Right lobe of liver (tissue), 6 donors: ENCODE measurements at regions of chr10 and their contacts with region 1.

Region 1: GRCh38 chr10:69914398-69915214 is 112.9 kb downstream of the COL13A1 start:
- DNase-seq: peak; percentile 69 to 78 (median 76)
- ATAC-seq: peak; percentile 87 to 96 (median 92)
- H3K4me3 ChIP-seq: no peak overlapping the region
- H3K27ac ChIP-seq: no peak overlapping the region
- H3K4me1 ChIP-seq: peaks cover 0 to 16% (median 5%) of the 10 kb centered on the region in 4 donors
- H3K27me3 ChIP-seq: no peaks in the 10 kb centered on the region
- CTCF ChIP-seq: peak; percentile 93 to 95 (median 95)
- POLR2A ChIP-seq: no peak

Region 2: DNA sequence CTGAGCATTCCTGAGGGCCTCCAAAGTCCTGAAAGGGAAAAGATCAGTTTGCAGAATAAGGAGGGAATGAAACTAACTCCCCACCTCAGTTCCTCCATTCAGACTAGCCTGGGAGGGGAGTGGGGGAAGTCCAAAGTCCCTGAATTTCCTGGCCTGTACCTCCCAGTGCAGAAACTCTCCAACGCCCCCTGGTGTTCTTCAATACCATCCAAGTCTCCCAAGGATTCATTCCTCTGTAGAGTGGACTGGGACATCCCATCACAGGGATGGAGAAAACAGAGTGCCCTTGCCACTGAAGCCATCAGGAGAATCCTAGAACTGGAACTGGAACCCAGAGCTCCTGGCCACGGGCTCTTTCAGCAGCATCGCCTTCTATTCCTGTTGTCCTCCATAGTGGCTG is 114.5 kb before region 1 on chr10:
- intact Hi-C with region 1: loop called in 1 of 2 experiments (anchors 10 kb)
- DNase-seq: no peak
- ATAC-seq: peak; percentile 63 to 78 (median 70)
- H3K4me3 ChIP-seq: no peak overlapping the region
- H3K27ac ChIP-seq: no peak overlapping the region
- H3K4me1 ChIP-seq: peaks cover 0 to 17% (median 0%) of the 10 kb centered on the region in 4 donors
- H3K27me3 ChIP-seq: peaks cover 0 to 14% of the 10 kb centered on the region in 2 donors
- CTCF ChIP-seq: peak; percentile 29 to 53 (median 50)
- POLR2A ChIP-seq: no peak

Region 3: GRCh38 chr10:69845574-69846292 is 68.9 kb before region 1 on chr10:
- intact Hi-C with region 1: no loop called
- DNase-seq: peak in 1 of 3 donors; percentile 44
- ATAC-seq: peak; percentile 9 to 81 (median 39)
- H3K4me3 ChIP-seq: no peak overlapping the region
- H3K27ac ChIP-seq: no peak overlapping the region
- H3K4me1 ChIP-seq: no peaks in the 10 kb centered on the region
- H3K27me3 ChIP-seq: no peaks in the 10 kb centered on the region
- CTCF ChIP-seq: no peak
- POLR2A ChIP-seq: no peak

Region 4: DNA sequence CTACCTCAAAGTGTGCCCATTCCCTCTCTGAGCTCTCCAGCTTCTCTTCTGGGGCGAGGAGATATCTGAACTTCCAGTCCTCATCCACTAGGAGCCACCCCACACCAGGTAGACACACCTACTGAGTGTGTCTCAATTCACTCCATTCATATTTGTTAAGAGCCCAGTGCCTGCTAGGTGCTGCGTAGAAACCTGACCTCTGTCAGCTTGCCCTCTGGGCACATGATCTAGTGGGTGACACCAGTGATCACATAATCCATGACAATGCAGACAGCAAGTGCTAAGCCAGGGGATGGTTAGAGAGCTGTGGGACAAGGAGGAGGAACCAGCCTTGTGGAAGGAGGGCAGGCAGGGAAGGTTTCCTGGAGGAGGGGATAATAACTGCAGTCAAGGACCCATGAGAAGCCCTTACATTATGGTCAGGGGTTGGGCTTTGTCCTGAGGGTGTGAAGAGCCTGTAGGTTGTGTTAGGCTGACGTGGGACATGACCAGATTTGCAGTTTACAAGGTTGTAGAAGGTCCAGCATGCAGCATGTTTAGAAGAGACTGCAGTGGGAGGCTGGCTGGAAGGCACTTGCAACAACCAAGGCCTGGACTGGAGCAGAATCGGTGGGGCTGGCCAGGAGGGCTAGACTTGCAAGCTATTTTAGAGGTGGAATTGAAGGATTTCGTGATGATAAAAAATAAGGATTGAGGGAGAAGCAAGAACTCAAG is 31.1 kb before region 1 on chr10:
- intact Hi-C with region 1: loop called (anchors 5 kb)
- DNase-seq: peak; percentile 47 to 82 (median 77)
- ATAC-seq: peak; percentile 97 to 98 (median 98)
- H3K4me3 ChIP-seq: no peak overlapping the region
- H3K27ac ChIP-seq: no peak overlapping the region
- H3K4me1 ChIP-seq: peaks cover 0 to 16% (median 7%) of the 10 kb centered on the region in 4 donors
- H3K27me3 ChIP-seq: no peaks in the 10 kb centered on the region
- CTCF ChIP-seq: peak; percentile 49 to 90 (median 67)
- POLR2A ChIP-seq: no peak